GM10248 (cell line): ENCODE measurements at regions of chr1 and their contacts with region 1.

Region 1: DNA sequence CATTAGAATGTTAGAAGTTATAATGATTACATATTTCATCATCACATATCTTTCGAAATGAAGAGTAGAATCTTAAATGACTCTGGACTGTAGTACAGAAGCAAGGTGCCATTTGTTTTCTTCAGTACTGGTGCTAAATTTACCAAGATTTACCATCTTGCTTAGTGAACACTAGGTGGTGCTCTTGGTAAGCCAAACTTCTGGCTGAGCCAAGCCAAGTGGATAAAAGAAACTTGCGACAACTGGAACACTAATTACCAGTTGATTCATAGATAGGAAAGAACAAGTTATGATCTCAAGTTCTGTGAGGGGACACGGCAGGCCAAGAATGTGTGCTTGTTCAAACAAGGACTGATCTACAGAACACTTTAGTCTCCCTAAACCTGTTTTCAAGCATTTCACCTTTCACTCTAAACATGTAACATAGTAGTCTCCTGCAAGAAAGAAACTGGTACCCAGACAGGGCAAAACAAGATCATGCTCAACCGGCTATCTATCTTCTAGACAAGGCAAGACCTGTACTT is 19.8 kb downstream of the SPRTN start:
- DNase-seq: peak; percentile 64
- CTCF ChIP-seq: peak; percentile 67

Region 2: GRCh38 chr1:231337472-231338269 is 20.2 kb before region 1 on chr1 and contains the start of gene EXOC8:
- CTCF ChIA-PET with region 1: interaction called, 10 read pairs
- POLR2A ChIA-PET with region 1: no interaction called
- DNase-seq: peak; percentile 97
- CTCF ChIP-seq: no peak

Region 3: GRCh38 chr1:231369282-231369681 is 11.4 kb after region 1 on chr1:
- CTCF ChIA-PET with region 1: interaction called, 16 read pairs
- POLR2A ChIA-PET with region 1: no interaction called
- DNase-seq: no peak
- CTCF ChIP-seq: no peak

Region 4: GRCh38 chr1:231442735-231443134 is 84.8 kb after region 1 on chr1:
- CTCF ChIA-PET with region 1: no interaction called
- POLR2A ChIA-PET with region 1: no interaction called
- DNase-seq: no peak
- CTCF ChIP-seq: no peak

Region 5: DNA sequence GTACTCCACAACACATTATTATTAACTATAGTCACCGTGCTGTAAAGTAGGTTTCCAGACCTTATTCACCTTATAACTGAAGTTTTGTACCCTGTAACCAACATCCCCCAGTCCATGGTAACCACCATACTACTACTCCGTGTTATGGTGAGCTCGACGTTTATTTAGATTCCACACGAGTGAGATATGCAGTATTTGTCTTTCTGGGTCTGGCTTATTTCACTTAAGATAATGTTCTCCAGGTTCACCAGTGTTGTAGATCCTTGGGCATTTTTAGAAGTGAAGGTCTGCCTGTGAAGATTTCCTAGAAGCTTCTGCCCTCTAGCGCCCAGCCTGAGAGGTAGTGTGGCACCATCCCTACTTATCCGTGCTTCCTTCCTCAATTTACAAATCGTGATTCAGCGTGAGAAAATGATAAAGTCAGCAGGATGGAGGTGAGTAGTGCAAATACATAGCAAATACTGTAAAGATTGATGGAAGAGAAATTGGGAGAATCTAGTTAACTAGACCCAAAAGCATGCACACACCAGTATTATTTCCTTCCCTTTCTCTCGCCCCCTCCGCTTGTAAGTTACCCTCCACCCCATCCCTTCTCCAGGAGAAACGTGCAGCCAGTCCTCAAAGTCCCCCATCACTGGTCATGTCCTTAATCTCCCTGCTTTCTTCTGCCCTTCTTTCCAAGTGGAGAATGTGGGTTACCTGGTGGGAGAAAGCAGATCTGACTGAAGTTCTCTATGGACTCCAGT is 232.7 kb after region 1 on chr1:
- CTCF ChIA-PET with region 1: interaction called, 54 read pairs
- POLR2A ChIA-PET with region 1: no interaction called
- DNase-seq: peak; percentile 44
- CTCF ChIP-seq: peak; percentile 78

Region 6: DNA sequence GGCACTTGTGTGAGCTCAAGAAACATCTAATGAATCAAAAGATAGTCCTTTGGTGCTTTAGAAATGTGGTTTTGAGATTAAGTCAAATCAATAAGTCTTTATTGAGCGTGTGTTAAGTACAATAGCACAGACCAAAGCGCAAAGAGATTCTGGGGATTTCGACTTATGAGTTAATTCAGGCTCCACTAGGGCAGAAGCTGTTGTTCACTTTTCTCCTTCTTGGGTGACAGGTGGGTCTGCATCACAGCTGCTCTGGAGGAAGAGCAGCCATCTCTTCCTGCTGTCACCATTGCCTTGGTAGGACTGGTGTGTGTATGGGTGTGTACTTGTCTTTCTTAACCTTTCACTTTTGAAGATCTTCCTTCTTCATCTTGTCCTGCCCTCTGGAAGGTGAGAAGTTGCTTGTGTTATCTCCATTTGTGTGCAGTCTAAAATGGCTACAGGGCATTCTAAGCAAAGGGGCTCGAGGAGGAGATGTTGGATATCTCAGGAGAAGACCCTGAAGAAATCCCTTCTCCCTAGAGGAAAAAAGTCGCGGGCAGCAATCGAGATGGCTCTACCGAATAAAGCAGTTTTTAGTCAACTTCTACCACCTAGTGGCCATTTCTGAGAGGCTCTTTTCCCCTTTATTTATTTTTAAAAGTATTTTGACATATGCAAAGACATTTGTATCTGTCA is 245.8 kb after region 1 on chr1:
- CTCF ChIA-PET with region 1: interaction called, 15 read pairs
- POLR2A ChIA-PET with region 1: no interaction called
- DNase-seq: peak; percentile 40
- CTCF ChIP-seq: peak; percentile 50